BJ (cell line): ENCODE measurements at regions of chr20 and their contacts with region 1.

Region 1: GRCh38 chr20:21705575-21706260 is at the start of gene PAX1:
- DNase-seq: no peak
- H3K4me3 ChIP-seq: no peak within 1 kb of the TSS
- H3K27me3 ChIP-seq: peaks cover 14% of the 10 kb centered on the region
- CTCF ChIP-seq: no peak
- polyA plus RNA-seq, gene PAX1: not detected in 2 replicates

Region 2: GRCh38 chr20:21571841-21572690 is 133.7 kb before region 1 on chr20:
- CTCF ChIA-PET with region 1: no interaction called
- POLR2A ChIA-PET with region 1: no interaction called
- DNase-seq: no peak
- H3K4me3 ChIP-seq: no peak overlapping the region
- H3K27me3 ChIP-seq: no peaks in the 10 kb centered on the region
- CTCF ChIP-seq: peak; percentile 86

Region 3: GRCh38 chr20:21719592-21720214 is 14.0 kb after region 1 on chr20:
- CTCF ChIA-PET with region 1: interaction called, 16 read pairs
- POLR2A ChIA-PET with region 1: no interaction called
- DNase-seq: no peak
- H3K4me3 ChIP-seq: no peak overlapping the region
- H3K27me3 ChIP-seq: 0 out of 2 replicates have a peak, but pooled peaks cover under 1% of the 10 kb centered on the region
- CTCF ChIP-seq: peak; percentile 72

Region 4: DNA sequence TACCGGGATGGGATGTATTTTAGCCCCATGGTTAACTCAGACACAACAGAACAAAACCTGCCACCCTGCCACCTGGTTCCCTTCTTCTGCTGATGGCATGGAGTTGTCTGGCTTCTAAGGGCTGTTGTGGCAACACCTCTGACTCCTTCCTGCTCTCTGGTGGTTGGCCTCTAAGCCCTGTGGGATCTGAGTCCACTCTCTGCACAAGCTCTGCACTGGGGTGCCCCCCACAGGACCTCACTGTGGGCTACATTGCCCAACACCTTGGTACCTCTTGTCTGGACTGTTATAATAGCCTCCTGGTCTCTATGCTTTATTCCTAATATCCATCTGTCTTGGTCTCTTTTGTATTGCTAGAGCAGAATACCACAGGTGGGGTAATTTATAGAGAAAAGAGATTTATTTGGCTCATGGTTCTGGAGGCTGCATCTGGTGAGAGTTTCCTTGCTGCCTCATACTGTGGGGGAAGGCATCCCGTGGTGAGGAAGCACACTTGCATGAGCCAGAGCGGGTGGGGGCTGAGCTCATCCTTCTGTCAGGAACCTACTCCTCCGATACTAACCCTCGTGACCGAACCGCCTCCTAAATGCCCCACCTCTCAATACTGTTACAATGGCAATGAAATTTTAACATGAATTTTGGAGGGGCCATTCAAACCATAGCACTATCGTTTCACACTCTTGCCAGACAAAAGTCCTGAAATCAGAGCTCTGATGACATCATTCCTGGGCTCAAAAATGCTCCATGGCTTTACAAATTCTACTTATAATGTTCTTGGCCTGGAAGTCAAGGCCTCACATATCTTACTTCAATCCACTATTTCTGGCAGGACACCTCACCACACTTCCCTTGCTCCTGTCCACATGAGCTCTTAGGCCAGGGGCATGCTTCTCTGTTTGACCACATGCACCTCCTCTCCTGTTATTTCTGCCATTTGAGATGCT is 127.0 kb after region 1 on chr20:
- CTCF ChIA-PET with region 1: no interaction called
- POLR2A ChIA-PET with region 1: no interaction called
- DNase-seq: no peak
- H3K4me3 ChIP-seq: no peak overlapping the region
- H3K27me3 ChIP-seq: no peaks in the 10 kb centered on the region
- CTCF ChIP-seq: no peak